A673 (cell line): ENCODE measurements at regions of chr11 and their contacts with region 1.

Region 1: GRCh38 chr11:60485986-60486385 is 6.6 kb upstream of the MS4A12 start:
- DNase-seq: peak; percentile 69
- H3K4me3 ChIP-seq: no peak overlapping the region
- H3K27ac ChIP-seq: no peak overlapping the region
- H3K4me1 ChIP-seq: no peaks in the 10 kb centered on the region
- H3K27me3 ChIP-seq: peaks cover 4% of the 10 kb centered on the region
- CTCF ChIP-seq: peak; percentile 72

Region 2: GRCh38 chr11:60265373-60266214 is 220.4 kb before region 1 on chr11:
- CTCF ChIA-PET with region 1: no interaction called
- POLR2A ChIA-PET with region 1: no interaction called
- intact Hi-C with region 1: loop called (anchors 5 kb)
- DNase-seq: peak; percentile 70
- H3K4me3 ChIP-seq: no peak overlapping the region
- H3K27ac ChIP-seq: no peak overlapping the region
- H3K4me1 ChIP-seq: no peaks in the 10 kb centered on the region
- H3K27me3 ChIP-seq: peaks cover 14% of the 10 kb centered on the region
- CTCF ChIP-seq: peak; percentile 74

Region 3: DNA sequence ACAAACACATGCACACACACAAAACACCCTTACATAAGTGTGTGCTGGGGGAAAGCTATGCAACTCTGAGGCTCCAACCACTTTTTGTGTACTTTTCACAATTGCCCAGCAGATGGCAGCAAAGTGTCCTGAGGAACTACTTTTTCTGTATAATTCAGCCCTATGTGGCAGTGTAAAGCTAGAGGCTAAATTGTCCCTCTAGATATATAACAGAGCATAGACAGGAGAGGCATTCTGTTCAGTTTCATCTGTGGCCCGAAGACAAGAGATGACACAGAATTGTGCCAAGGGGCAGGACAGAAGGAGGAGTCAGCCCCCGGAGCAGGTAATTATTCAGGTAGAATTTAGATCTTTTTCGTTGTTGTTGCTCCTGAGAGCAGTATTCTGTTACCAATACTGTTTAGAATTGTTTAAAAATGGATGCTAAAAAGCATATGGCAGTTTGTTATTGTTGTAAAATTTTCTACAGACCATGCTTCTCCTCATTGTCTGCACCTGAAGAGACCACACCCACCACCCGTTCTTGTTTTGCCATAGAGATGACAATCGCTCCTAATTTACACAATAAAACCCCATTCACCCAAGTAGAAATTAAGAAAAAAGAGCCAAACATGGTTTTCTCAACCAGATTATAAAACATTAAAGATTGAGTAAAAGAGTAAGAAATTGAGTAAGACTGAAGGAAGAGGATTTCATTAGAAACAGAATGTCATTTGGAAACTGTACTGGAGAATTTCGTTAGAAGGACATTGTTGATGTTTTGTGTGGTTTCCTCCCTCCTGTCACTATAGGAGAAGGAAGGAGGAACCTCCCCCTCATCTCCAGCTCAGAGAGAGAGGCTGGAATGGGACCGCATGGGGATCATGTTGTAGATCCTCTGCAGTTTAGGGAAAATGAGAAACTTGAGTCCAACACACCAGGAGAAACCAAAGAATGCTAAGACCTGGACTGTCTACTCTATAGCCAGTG is 122.2 kb before region 1 on chr11:
- CTCF ChIA-PET with region 1: interaction called, 4 read pairs
- POLR2A ChIA-PET with region 1: no interaction called
- intact Hi-C with region 1: loop called (anchors 5 kb)
- DNase-seq: peak; percentile 78
- H3K4me3 ChIP-seq: no peak overlapping the region
- H3K27ac ChIP-seq: no peak overlapping the region
- H3K4me1 ChIP-seq: no peaks in the 10 kb centered on the region
- H3K27me3 ChIP-seq: peaks cover 17% of the 10 kb centered on the region
- CTCF ChIP-seq: peak; percentile 84